ENCODE measurements at regions of chr6 and their contacts with region 1.

Region 1: GRCh38 chr6:17584241-17584803 is 15.8 kb upstream of the FAM8A1 start:
- DNase-seq: no peak
- ATAC-seq: peak; percentile 73 to 83
- H3K4me3 ChIP-seq: no peak overlapping the region
- H3K27ac ChIP-seq: peak overlapping the region; percentile 33
- H3K4me1 ChIP-seq: peaks cover 22% of the 10 kb centered on the region
- H3K27me3 ChIP-seq: no peaks in the 10 kb centered on the region
- CTCF ChIP-seq: peak; percentile 75

Region 2: GRCh38 chr6:16635810-16636602 is 948.3 kb before region 1 on chr6:
- intact Hi-C with region 1: no loop called
- DNase-seq: no peak
- ATAC-seq: peak; percentile 42 to 52
- H3K4me3 ChIP-seq: no peak overlapping the region
- H3K27ac ChIP-seq: no peak overlapping the region
- H3K4me1 ChIP-seq: peaks cover 14% of the 10 kb centered on the region
- H3K27me3 ChIP-seq: no peaks in the 10 kb centered on the region
- CTCF ChIP-seq: no peak

Region 3: GRCh38 chr6:17156112-17156921 is 428.0 kb before region 1 on chr6:
- intact Hi-C with region 1: loop called (anchors 5 kb)
- DNase-seq: no peak
- ATAC-seq: peak; percentile 61 to 66
- H3K4me3 ChIP-seq: no peak overlapping the region
- H3K27ac ChIP-seq: no peak overlapping the region
- H3K4me1 ChIP-seq: no peaks in the 10 kb centered on the region
- H3K27me3 ChIP-seq: no peaks in the 10 kb centered on the region
- CTCF ChIP-seq: peak; percentile 83

Region 4: DNA sequence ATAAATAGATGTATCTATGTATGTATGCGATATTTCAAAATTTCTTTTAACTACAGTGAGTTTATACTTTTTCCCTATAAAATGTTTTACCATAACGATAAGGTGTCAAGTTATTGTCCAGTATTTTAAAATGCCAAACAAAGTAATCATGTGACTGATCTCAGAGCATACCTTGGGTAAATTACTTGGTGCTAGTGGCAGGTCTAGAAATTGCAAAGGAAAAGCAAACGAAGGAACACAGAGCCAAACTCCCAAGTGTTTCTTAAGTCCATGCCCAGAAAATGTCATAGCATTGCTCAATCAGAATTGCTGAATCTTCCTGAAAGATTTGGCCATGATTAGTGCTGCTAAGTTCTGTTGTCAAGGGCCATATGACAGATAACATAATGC is 113.4 kb before region 1 on chr6:
- intact Hi-C with region 1: loop called (anchors 10 kb)
- DNase-seq: no peak
- ATAC-seq: peak; percentile 62 to 78
- H3K4me3 ChIP-seq: no peak overlapping the region
- H3K27ac ChIP-seq: no peak overlapping the region
- H3K4me1 ChIP-seq: peaks cover 14% of the 10 kb centered on the region
- H3K27me3 ChIP-seq: no peaks in the 10 kb centered on the region
- CTCF ChIP-seq: no peak

Region 5: DNA sequence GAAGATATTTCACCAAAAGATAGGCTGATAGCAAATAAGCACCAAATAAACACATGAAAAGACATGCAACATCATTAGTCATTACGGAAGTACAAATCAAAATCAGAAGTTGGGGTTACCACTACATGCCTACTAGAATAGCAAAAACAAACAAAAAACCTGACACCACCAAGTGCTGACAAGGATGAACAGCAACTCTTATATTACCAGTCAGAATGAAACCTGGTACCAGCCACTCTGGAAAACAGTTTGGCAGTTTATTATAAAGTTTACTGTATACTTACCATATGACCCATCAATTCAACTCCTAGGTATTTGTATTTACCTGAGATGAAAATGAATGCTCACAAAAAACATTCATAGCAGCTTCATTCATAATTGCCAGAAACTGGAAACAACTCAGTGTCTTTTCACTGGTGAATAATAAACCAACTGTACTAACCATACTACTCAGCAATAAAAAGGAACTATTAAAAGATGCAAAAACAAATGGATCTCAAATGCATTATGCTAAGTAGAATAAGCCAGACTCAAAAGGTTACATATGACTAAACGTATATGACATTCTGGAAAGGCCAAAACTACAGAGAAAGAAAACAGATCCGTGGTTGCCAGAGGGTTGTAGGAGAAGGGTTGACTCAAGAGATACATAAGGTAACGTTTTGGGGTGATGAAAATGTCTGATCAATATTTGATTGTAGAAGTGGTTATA is 89.4 kb after region 1 on chr6:
- intact Hi-C with region 1: no loop called
- DNase-seq: no peak
- ATAC-seq: no peak
- H3K4me3 ChIP-seq: no peak overlapping the region
- H3K27ac ChIP-seq: no peak overlapping the region
- H3K4me1 ChIP-seq: no peaks in the 10 kb centered on the region
- H3K27me3 ChIP-seq: no peaks in the 10 kb centered on the region
- CTCF ChIP-seq: no peak